GM12878 (cell line): ENCODE measurements at regions of chr10 and their contacts with region 1.

Region 1: GRCh38 chr10:89217057-89217990 is 10.2 kb upstream of the CH25H start:
- DNase-seq: peak; percentile 12
- ATAC-seq: peak; percentile 83
- H3K4me3 ChIP-seq: no peak overlapping the region
- H3K27ac ChIP-seq: no peak overlapping the region
- H3K4me1 ChIP-seq: peaks cover 3% of the 10 kb centered on the region; the same call in 1 of the 2 replicates
- H3K27me3 ChIP-seq: no peaks in the 10 kb centered on the region
- CTCF ChIP-seq: peak; percentile 50 to 66 (median 64)
- EP300 ChIP-seq: no peak
- POLR2A ChIP-seq: no peak
- RAD21 ChIP-seq: peak; percentile 77

Region 2: GRCh38 chr10:88990384-88991160 is 226.8 kb before region 1 on chr10 and contains the start of gene FAS:
- CTCF ChIA-PET with region 1: interaction called, 41 read pairs
- POLR2A ChIA-PET with region 1: no interaction called
- RAD21 ChIA-PET with region 1: interaction called, 7 read pairs
- SMC1A ChIA-PET with region 1: interaction called, 21 read pairs
- in situ Hi-C with region 1: no loop called
- intact Hi-C with region 1: no loop called
- DNase-seq: peak; percentile 80
- ATAC-seq: peak; percentile 75
- H3K4me3 ChIP-seq: peak within 1 kb of the TSS; percentile 83
- H3K27ac ChIP-seq: peak within 1 kb of the TSS; percentile 98
- H3K4me1 ChIP-seq: peaks cover 13% of the 10 kb centered on the region
- H3K27me3 ChIP-seq: no peaks in the 10 kb centered on the region
- CTCF ChIP-seq: no peak
- EP300 ChIP-seq: peak in 1 of 2 experiments; percentile 32; a peak in 1 of 4 replicates
- POLR2A ChIP-seq: peak; percentile 86
- RAD21 ChIP-seq: no peak
- polyA plus RNA-seq, gene FAS: 50.1 to 54.9 TPM

Region 3: DNA sequence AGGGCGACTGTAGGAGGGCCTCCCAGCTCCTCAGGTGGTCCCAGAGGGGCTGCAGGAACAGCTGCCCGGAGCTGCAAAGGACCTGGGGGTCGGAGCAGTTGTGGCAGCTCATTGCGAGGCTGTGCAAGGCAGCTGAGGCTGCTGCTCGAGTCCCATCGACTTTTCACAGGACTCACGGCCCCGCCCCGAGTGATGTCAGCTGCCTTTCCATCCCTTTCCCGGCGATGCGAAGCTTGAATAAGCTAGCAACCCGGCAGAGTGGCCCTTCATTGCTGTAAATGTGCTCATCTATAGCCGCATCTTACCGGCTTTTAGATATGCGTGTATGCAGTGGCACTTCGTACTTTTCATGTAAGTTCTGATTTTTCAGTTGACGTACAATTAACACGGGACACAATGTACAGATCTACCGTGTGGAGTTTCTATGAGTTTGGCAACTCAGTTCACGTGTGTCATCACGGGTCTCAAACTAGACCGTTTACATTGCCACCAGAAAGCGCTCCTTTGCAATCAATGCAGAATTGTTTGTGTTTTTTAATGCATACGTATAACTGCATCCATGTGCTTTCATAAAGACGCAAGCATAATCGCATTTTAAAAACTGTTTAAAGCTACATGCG is 10.0 kb before region 1 on chr10 and contains the start of gene CH25H:
- CTCF ChIA-PET with region 1: interaction called, 9 read pairs
- POLR2A ChIA-PET with region 1: no interaction called
- RAD21 ChIA-PET with region 1: interaction called, 5 read pairs
- SMC1A ChIA-PET with region 1: interaction called, 11 read pairs
- in situ Hi-C with region 1: no loop called
- intact Hi-C with region 1: no loop called
- DNase-seq: no peak
- ATAC-seq: peak; percentile 59
- H3K4me3 ChIP-seq: peak within 1 kb of the TSS; percentile 66
- H3K27ac ChIP-seq: no peak within 1 kb of the TSS
- H3K4me1 ChIP-seq: peaks cover 24% of the 10 kb centered on the region
- H3K27me3 ChIP-seq: peaks cover 6 to 22% of the 10 kb centered on the region in 2 experiments
- CTCF ChIP-seq: no peak
- EP300 ChIP-seq: no peak
- POLR2A ChIP-seq: no peak
- RAD21 ChIP-seq: no peak
- polyA plus RNA-seq, gene CH25H: not detected

Region 4: GRCh38 chr10:89241486-89242344 is 24.4 kb after region 1 on chr10:
- CTCF ChIA-PET with region 1: interaction called, 92 read pairs
- POLR2A ChIA-PET with region 1: interaction called, 4 read pairs
- RAD21 ChIA-PET with region 1: interaction called, 18 read pairs
- SMC1A ChIA-PET with region 1: interaction called, 46 read pairs
- in situ Hi-C with region 1: no loop called
- intact Hi-C with region 1: no loop called
- DNase-seq: no peak
- ATAC-seq: peak; percentile 71
- H3K4me3 ChIP-seq: no peak overlapping the region
- H3K27ac ChIP-seq: peak overlapping the region; percentile 62
- H3K4me1 ChIP-seq: peaks cover 43% of the 10 kb centered on the region
- H3K27me3 ChIP-seq: no peaks in the 10 kb centered on the region
- CTCF ChIP-seq: no peak
- EP300 ChIP-seq: no peak
- POLR2A ChIP-seq: no peak
- RAD21 ChIP-seq: no peak

Region 5: DNA sequence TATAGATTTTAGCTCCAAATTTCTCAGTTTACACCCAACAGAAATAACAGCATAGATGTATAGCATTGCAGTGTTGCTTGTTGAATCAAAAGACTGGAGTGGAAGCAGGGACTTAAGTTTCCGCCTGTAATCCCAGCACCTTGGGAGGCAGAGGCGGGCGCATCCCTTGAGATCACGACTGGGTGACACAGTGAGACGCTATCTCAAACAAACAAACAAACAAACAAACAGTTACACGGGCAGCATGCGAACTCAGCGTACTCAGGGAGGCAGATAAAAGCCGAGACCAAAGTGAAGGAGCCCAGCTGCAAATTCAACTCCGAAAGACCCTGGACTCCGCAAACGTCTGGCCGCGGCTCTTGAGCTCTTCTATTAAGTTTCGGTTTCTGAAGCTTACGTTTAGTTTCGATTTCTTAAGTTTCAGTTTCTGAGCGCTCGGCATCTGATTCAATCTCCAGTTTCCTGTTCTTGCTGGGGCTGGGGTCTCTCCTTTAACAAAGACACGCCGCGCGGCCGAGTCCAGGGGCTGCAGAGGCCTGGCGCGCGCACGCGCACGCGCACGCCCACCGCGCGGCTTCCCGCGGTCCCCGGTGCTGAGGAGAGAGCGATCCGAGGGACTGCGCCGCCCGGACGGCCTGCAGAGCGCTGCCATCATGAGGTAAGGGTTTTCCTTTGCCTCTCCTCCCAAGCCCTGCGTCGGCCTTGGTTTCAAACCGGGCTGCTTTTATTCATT is 197.0 kb after region 1 on chr10 and contains the start of gene IFIT5:
- CTCF ChIA-PET with region 1: interaction called, 10 read pairs
- POLR2A ChIA-PET with region 1: no interaction called
- RAD21 ChIA-PET with region 1: no interaction called
- SMC1A ChIA-PET with region 1: interaction called, 4 read pairs
- in situ Hi-C with region 1: no loop called
- intact Hi-C with region 1: no loop called
- DNase-seq: peak; percentile 58
- ATAC-seq: peak; percentile 84
- H3K4me3 ChIP-seq: peak within 1 kb of the TSS; percentile 79
- H3K27ac ChIP-seq: peak within 1 kb of the TSS; percentile 97
- H3K4me1 ChIP-seq: no peaks in the 10 kb centered on the region
- H3K27me3 ChIP-seq: no peaks in the 10 kb centered on the region
- CTCF ChIP-seq: no peak
- EP300 ChIP-seq: no peak
- POLR2A ChIP-seq: peak; percentile 57
- RAD21 ChIP-seq: no peak
- polyA plus RNA-seq, gene IFIT5: 5.9 to 8.3 TPM